HEK293 (cell line): ENCODE measurements at regions of chr19 and their contacts with region 1.

Region 1: DNA sequence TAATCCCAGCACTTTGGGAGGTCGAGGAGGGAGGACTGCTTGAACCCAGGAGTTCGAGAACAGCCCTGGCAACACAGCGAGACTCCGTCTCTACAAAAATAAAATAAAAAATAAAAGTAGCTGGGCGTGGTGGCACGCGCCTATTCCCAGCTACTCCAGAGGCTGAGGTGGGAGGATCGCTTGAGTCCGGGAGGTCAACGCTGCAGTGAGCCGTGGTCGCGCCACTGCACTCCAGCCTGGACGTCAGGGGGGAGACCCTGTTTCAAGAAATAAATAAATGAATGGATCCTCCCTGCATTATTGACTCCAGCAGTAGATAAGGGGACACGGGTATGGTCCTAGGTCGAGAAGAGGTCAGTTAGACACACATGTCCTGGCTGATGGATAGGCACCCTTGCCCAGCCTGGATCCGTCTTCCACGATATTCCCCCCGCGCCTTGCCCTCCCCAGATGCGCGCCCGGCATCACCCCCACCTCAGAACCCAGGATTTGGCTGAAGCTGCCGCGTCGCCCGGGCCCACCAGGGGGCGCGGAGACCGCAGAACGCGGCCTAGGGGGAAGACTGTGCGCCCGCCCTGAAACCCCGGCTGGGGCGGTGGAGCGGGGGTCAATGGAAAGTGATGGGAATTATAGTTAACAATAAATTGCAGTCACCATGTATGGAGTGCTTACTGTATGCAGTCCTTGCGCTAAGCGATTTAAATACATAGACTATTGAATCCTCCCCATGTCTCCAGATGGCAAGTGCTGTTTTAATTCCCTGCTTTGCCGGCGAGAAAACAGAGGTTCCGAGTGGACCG is 2.1 kb upstream of the HOOK2 start:
- H3K4me3 ChIP-seq: peak overlapping the region; percentile 39
- H3K27ac ChIP-seq: no peak overlapping the region
- H3K4me1 ChIP-seq: peaks cover 4% of the 10 kb centered on the region; the same call in 1 of the 2 replicates
- CTCF ChIP-seq: peak; percentile 81

Region 2: DNA sequence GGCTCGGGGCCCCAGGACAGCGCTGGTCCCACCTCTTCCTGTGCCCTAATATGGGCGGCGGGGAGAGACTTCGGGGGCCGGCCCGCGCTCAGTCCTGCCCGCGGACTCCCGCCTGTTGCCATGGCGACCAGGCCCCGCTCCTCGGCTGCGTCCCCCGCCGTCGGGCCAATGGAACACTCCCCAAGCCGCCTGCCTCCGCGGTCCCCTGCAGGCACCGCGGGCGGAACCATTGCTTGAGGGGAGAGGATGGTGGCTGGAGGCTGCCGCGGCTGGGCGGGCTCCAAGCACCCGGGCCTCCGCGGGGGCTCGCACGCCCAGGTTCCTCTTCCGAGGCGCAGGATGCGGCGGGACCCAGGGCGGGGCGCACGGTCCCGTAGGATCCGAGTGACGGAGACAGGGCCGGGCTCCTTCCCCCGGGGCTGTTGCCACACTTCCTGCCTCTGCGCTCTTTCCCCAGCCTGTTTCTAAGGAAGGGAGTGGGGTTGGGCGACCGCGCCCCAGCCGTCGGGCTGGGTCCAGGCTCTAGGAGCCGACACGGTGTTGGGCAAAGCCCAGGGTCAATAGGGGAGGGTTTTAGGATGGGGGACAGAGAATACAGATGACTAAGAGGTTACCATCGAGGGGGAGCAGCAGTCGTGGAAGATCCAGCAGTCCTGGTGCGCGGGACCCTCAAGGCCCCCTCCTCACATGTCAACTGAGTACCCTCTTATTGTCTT is 12.6 kb after region 1 on chr19:
- CTCF ChIA-PET with region 1: interaction called, 234 read pairs
- POLR2A ChIA-PET with region 1: interaction called, 42 read pairs
- H3K4me3 ChIP-seq: peak overlapping the region; percentile 30
- H3K27ac ChIP-seq: no peak overlapping the region; the same call in 1 of the 2 replicates
- H3K4me1 ChIP-seq: peaks cover 21% of the 10 kb centered on the region
- CTCF ChIP-seq: no peak; the same call in 1 of the 2 replicates

Region 3: GRCh38 chr19:12796146-12797071 is 19.0 kb after region 1 on chr19:
- CTCF ChIA-PET with region 1: interaction called, 234 read pairs
- POLR2A ChIA-PET with region 1: interaction called, 42 read pairs
- H3K4me3 ChIP-seq: no peak overlapping the region
- H3K27ac ChIP-seq: no peak overlapping the region
- H3K4me1 ChIP-seq: peaks cover 4% of the 10 kb centered on the region
- CTCF ChIP-seq: peak; percentile 97